Endothelial cell of umbilical vein (primary cell): ENCODE measurements at regions of chr18 and their contacts with region 1.

Region 1: GRCh38 chr18:34787931-34788532 is 77.9 kb downstream of the DTNA start:
- DNase-seq: peak; percentile 80
- H3K4me3 ChIP-seq: no peak overlapping the region
- H3K27ac ChIP-seq: no peak overlapping the region
- H3K4me1 ChIP-seq: no peaks in the 10 kb centered on the region
- H3K27me3 ChIP-seq: no peaks in the 10 kb centered on the region
- CTCF ChIP-seq: peak; percentile 37 to 48
- POLR2A ChIP-seq: no peak

Region 2: DNA sequence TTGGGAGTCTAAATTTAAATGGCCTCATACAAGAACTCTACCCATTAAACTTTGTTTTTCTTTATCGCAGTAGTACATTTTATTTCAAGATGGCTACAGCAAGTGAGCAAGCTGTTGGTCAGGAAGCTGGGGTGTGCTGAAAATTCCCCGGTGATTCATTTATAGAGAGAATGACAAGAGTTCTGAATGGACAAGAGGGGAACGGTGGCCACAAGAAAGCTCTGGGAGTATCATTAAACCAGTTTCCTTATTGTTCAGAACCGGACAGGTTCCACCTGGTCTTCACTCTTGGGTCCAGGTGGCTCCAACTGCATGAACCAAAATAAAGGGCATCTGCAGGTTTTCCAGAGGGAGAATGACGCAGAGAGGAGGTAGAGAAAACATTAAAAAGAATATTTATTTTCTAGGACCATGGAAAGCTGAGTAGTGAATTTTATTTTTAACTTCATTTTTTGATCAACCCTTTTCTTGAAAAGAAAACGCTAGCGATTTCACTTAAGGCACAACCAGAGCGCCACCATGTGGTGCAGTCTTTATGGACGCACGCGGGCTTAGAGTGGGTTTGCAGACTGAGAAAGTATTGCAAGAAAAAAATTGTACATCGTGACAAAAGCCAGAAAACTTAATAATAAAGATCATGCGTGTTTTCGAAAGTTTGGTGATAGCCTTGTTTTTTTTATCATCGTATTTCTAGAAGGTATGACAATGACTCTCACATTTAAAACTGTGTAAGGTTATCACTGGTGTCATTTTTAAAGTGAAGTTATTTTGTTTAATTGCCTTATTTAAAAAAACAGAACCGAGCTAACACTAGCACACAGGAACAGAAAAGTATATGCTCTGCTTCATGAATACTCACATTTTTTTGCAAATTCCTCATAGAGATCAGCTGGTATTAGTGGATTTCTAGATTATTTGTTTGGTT is 465.4 kb before region 1 on chr18:
- CTCF ChIA-PET with region 1: interaction called, 21 read pairs
- POLR2A ChIA-PET with region 1: no interaction called
- dilution Hi-C with region 1: no loop called
- intact Hi-C with region 1: loop called (anchors 5 kb)
- DNase-seq: peak; percentile 65
- H3K4me3 ChIP-seq: no peak overlapping the region
- H3K27ac ChIP-seq: no peak overlapping the region
- H3K4me1 ChIP-seq: no peaks in the 10 kb centered on the region
- H3K27me3 ChIP-seq: peaks cover 0 to 5% of the 10 kb centered on the region in 2 experiments
- CTCF ChIP-seq: peak; percentile 66 to 71
- POLR2A ChIP-seq: no peak

Region 3: GRCh38 chr18:34493099-34493544 is 294.9 kb before region 1 on chr18:
- CTCF ChIA-PET with region 1: interaction called, 3 read pairs
- POLR2A ChIA-PET with region 1: no interaction called
- dilution Hi-C with region 1: no loop called
- intact Hi-C with region 1: loop called (anchors 5 kb)
- DNase-seq: peak; percentile 87
- H3K4me3 ChIP-seq: peak overlapping the region; percentile 57 to 85 (median 72)
- H3K27ac ChIP-seq: peak overlapping the region; percentile 68
- H3K4me1 ChIP-seq: no peaks in the 10 kb centered on the region
- H3K27me3 ChIP-seq: no peaks in the 10 kb centered on the region
- CTCF ChIP-seq: no peak
- POLR2A ChIP-seq: no peak

Region 4: GRCh38 chr18:34600118-34600517 is 187.9 kb before region 1 on chr18:
- CTCF ChIA-PET with region 1: interaction called, 23 read pairs
- POLR2A ChIA-PET with region 1: no interaction called
- dilution Hi-C with region 1: no loop called
- intact Hi-C with region 1: loop called (anchors 1 kb)
- DNase-seq: peak; percentile 14
- H3K4me3 ChIP-seq: no peak overlapping the region
- H3K27ac ChIP-seq: no peak overlapping the region
- H3K4me1 ChIP-seq: no peaks in the 10 kb centered on the region
- H3K27me3 ChIP-seq: no peaks in the 10 kb centered on the region
- CTCF ChIP-seq: no peak
- POLR2A ChIP-seq: no peak

Region 5: GRCh38 chr18:34729264-34729663 is 58.8 kb before region 1 on chr18:
- CTCF ChIA-PET with region 1: interaction called, 6 read pairs
- POLR2A ChIA-PET with region 1: no interaction called
- dilution Hi-C with region 1: no loop called
- intact Hi-C with region 1: loop called (anchors 1 kb)
- DNase-seq: peak; percentile 24
- H3K4me3 ChIP-seq: no peak overlapping the region
- H3K27ac ChIP-seq: no peak overlapping the region
- H3K4me1 ChIP-seq: no peaks in the 10 kb centered on the region
- H3K27me3 ChIP-seq: no peaks in the 10 kb centered on the region
- CTCF ChIP-seq: peak; percentile 23 to 47
- POLR2A ChIP-seq: no peak

Region 6: DNA sequence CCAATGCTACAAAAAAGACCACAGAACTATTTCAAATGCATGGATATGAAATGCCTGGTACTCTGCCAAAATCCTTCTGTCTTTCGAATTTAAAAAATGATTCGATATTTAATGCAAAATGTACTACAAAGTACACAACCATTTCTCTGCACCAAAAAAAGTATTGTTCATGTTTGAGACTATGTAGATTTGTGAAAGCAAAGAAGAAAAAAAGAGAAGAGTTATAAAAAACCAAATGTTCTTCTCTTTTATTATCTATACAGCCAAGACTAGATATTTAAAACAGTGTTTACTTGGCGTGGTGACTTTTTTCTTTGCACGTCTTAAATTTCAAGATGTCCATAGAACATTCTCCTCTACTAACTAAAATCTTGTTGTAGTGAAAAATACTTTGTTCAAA is 11.3 kb after region 1 on chr18:
- CTCF ChIA-PET with region 1: interaction called, 12 read pairs
- POLR2A ChIA-PET with region 1: no interaction called
- dilution Hi-C with region 1: no loop called
- intact Hi-C with region 1: no loop called
- DNase-seq: no peak
- H3K4me3 ChIP-seq: no peak overlapping the region
- H3K27ac ChIP-seq: no peak overlapping the region
- H3K4me1 ChIP-seq: no peaks in the 10 kb centered on the region
- H3K27me3 ChIP-seq: no peaks in the 10 kb centered on the region
- CTCF ChIP-seq: no peak
- POLR2A ChIP-seq: no peak

Region 7: DNA sequence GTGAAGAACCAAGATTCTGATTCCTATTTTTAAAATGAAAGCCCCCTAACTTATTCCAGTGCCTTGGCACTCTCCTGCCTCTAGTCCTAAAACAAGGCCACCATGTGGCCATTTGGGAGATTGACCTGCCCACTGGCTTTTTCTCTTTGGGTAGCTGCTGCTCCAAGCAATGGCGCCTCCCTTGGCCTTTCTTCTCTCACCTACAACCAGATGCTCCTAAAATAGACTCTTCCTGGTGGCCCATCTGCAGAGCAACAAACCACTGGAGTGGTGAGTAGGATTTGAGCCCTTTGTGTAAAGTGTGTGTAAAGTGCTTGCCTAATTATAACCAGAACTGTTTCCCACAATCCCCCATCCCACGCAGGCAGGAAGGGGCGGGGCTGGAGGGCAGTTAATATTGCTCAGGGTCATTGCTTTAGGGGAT is 1623.7 kb after region 1 on chr18:
- CTCF ChIA-PET with region 1: no interaction called
- POLR2A ChIA-PET with region 1: no interaction called
- dilution Hi-C with region 1: no loop called
- intact Hi-C with region 1: no loop called
- DNase-seq: no peak
- H3K4me3 ChIP-seq: no peak overlapping the region
- H3K27ac ChIP-seq: no peak overlapping the region
- H3K4me1 ChIP-seq: no peaks in the 10 kb centered on the region
- H3K27me3 ChIP-seq: no peaks in the 10 kb centered on the region
- CTCF ChIP-seq: peak; percentile 13 to 24
- POLR2A ChIP-seq: no peak